K562 (cell line): ENCODE measurements at regions of chr15 and their contacts with region 1.

Region 1: GRCh38 chr15:77192451-77192850 is 121.5 kb upstream of the TSPAN3 start:
- DNase-seq: no peak
- ATAC-seq: no peak
- H3K4me3 ChIP-seq: no peak overlapping the region
- H3K27ac ChIP-seq: no peak overlapping the region
- H3K4me1 ChIP-seq: peaks cover 0 to 5% of the 10 kb centered on the region in 2 experiments; a peak in 3 of 5 replicates
- H3K27me3 ChIP-seq: no peaks in the 10 kb centered on the region
- CTCF ChIP-seq: no peak
- EP300 ChIP-seq: no peak
- POLR2A ChIP-seq: no peak
- RAD21 ChIP-seq: no peak

Region 2: GRCh38 chr15:77070495-77071304 is 121.8 kb before region 1 on chr15 and contains the start of gene TSPAN3:
- CTCF ChIA-PET with region 1: no interaction called
- POLR2A ChIA-PET with region 1: no interaction called
- in situ Hi-C with region 1: no loop called
- intact Hi-C with region 1: no loop called
- DNase-seq: peak; percentile 95 to 97 (median 96)
- ATAC-seq: peak; percentile 99
- H3K4me3 ChIP-seq: peak within 1 kb of the TSS; percentile 81
- H3K27ac ChIP-seq: peak within 1 kb of the TSS; percentile 81
- H3K4me1 ChIP-seq: peaks cover 11 to 33% of the 10 kb centered on the region in 2 experiments
- H3K27me3 ChIP-seq: peaks cover 12 to 25% of the 10 kb centered on the region in 2 experiments; a peak in 4 of 5 replicates
- CTCF ChIP-seq: no peak
- EP300 ChIP-seq: no peak
- POLR2A ChIP-seq: peak; percentile 68
- RAD21 ChIP-seq: no peak
- polyA plus RNA-seq, gene TSPAN3: 14.3 to 21.2 TPM

Region 3: DNA sequence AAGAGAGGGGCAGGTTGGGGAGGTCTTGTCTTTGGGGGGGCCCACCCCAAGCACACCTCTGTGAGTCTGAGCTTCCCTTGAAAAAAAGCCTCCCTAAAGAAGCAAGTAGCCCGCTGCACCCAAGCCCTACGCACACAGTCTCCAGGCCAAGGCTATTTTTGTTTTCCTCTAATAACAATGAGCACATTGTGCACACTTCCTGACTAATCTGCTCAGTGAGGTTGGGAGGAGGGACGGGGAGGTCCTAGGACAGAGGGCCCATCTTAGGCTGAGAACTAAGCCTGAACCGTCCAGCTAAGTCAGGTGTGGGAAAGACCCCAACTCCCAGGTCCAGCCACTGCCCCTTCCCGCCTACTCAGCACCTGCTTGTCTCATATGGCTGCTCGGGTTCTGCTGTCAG is 315.5 kb after region 1 on chr15:
- CTCF ChIA-PET with region 1: no interaction called
- POLR2A ChIA-PET with region 1: no interaction called
- in situ Hi-C with region 1: loop called (anchors 5 kb)
- intact Hi-C with region 1: no loop called
- DNase-seq: no peak
- ATAC-seq: no peak
- H3K4me3 ChIP-seq: no peak overlapping the region
- H3K27ac ChIP-seq: no peak overlapping the region
- H3K4me1 ChIP-seq: peaks cover 5 to 6% of the 10 kb centered on the region in 2 experiments; a peak in 3 of 5 replicates
- H3K27me3 ChIP-seq: peaks cover 0 to 29% of the 10 kb centered on the region in 2 experiments; a peak in 2 of 5 replicates
- CTCF ChIP-seq: no peak
- EP300 ChIP-seq: no peak
- POLR2A ChIP-seq: no peak
- RAD21 ChIP-seq: no peak